Naive thymus-derived CD4-positive, alpha-beta T cell (primary cell): ENCODE measurements at regions of chr14 and their contacts with region 1.

Region 1: DNA sequence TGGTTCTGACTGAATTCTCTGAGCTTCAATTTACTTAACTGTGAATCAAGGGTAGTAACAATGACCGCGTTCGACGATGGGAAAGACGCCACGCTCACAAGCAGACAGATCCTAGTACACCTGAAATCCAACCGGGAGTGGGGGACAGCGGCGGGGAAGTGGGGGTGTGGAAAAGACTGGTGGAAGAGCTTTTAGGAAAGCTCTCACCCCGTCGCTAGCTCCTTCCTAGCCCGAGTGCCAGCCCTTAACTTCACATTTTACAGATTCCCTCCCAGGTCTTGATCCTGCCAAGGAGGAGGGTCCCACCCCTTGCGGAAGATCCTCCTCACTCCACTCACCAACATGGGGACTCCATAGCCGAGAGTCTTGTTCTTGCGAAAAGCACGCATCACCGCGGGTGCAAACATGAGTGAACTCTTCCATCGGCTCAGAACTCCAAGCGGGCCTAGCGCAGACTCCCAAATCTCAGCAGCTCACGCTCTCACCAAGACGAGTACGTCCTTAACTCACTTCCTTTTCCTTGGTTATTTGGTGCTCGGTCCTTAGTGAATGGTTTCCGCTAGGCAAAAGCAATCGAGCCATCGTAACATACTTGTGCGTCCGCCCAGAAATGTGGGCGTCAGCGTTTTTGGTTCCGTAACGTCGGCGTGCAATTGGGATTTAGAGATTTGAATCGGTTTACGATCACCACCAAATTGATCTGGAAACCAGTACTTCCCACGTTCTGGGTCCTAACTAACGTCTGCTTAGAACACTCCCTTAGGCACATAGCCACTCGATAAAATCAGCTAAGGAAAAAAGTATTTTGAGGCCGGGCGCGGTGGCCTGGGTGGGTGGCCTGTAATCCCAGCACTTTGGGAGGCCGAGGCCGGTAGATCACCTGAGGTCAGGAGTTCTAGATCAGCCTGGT is at the start of gene COX16:
- DNase-seq: peak; percentile 45 to 84 (median 81)
- ATAC-seq: peak; percentile 99
- H3K4me3 ChIP-seq: peak within 1 kb of the TSS; percentile 73
- H3K4me3 Mint-ChIP-seq: peak within 1 kb of the TSS; percentile 97 to 100 (median 99)
- H3K27ac ChIP-seq: peak within 1 kb of the TSS; percentile 82
- H3K27ac Mint-ChIP-seq: peak within 1 kb of the TSS; percentile 87 to 98 (median 94)
- H3K4me1 ChIP-seq: peaks cover 3 to 26% of the 10 kb centered on the region in 2 donors
- H3K4me1 Mint-ChIP-seq: peaks cover 32 to 58% (median 52%) of the 10 kb centered on the region in 7 donors
- H3K27me3 ChIP-seq: no peaks in the 10 kb centered on the region
- H3K27me3 Mint-ChIP-seq: peaks cover 0 to 12% (median 0%) of the 10 kb centered on the region in 5 donors
- total RNA-seq, gene COX16: 11.8 to 57.0 (median 19.5) TPM

Region 2: DNA sequence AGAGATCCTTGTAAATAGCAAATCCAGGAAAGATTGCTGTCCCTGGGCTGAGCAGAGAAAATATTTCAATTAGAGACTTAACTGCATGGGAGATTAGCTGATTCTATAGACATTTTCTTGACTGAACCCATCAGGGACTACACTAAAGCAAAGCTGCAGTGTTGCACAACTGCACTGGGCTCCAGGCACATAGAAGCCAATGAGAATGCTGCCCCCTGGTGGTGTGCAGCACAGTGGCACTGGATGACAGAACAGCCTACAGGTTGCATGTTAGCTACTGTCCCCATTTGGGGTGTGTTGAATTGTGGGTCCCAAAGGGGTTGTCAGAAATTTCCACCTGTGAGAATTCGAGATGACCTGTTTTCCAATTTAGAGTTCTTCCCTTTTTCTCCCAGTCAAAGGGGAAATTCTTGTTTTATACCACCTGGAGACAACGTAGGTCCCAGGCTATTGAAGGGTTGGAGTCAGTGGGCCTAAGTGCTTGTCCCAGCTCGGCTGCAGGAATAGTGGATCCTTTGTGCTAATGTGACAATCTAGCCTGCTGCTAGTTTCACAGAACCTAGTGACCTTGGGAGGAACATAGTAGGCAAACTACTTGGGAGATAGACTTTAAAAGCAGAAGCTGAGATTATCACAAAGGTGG is 285.4 kb before region 1 on chr14:
- CTCF ChIA-PET with region 1: no interaction called
- POLR2A ChIA-PET with region 1: no interaction called
- intact Hi-C with region 1: no loop called
- DNase-seq: peak in 4 of 9 donors; percentile 3 to 35 (median 6)
- ATAC-seq: no peak
- H3K4me3 ChIP-seq: no peak overlapping the region
- H3K4me3 Mint-ChIP-seq: no peak overlapping the region
- H3K27ac ChIP-seq: no peak overlapping the region
- H3K27ac Mint-ChIP-seq: no peak overlapping the region
- H3K4me1 ChIP-seq: no peaks in the 10 kb centered on the region
- H3K4me1 Mint-ChIP-seq: no peaks in the 10 kb centered on the region
- H3K27me3 ChIP-seq: no peaks in the 10 kb centered on the region
- H3K27me3 Mint-ChIP-seq: peaks cover 23 to 44% (median 33%) of the 10 kb centered on the region in 5 donors

Region 3: GRCh38 chr14:70254476-70254961 is 104.9 kb before region 1 on chr14:
- CTCF ChIA-PET with region 1: no interaction called
- POLR2A ChIA-PET with region 1: no interaction called
- intact Hi-C with region 1: loop called in 1 of 2 experiments (anchors 1 kb)
- DNase-seq: peak in 2 of 9 donors; percentile 1 to 11
- ATAC-seq: peak; percentile 54
- H3K4me3 ChIP-seq: no peak overlapping the region
- H3K4me3 Mint-ChIP-seq: peak overlapping the region in 6 of 10 donors; percentile 30 to 78 (median 36)
- H3K27ac ChIP-seq: no peak overlapping the region
- H3K27ac Mint-ChIP-seq: no peak overlapping the region
- H3K4me1 ChIP-seq: no peaks in the 10 kb centered on the region
- H3K4me1 Mint-ChIP-seq: peaks cover 4 to 15% (median 8%) of the 10 kb centered on the region in 7 donors
- H3K27me3 ChIP-seq: no peaks in the 10 kb centered on the region
- H3K27me3 Mint-ChIP-seq: peaks cover 61 to 73% (median 65%) of the 10 kb centered on the region in 5 donors

Region 4: DNA sequence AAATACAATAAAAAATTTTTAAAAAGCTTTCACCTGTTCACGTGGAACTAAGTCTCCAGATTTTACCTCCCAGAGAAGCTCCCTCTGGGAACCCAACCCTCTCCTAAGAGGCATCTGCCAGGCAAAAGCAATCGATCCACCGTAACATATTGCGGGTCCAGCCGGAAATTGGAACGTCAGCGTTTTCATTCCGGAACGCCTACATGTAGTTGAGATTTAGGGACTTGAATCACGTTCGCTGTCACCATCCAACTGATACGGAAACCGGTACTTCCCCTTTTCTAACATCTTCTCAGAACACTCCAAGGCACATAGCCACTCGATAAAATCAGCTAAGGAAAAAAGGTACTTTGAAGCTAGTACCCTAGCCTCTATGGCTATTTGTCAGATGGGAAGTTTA is 70.3 kb before region 1 on chr14:
- CTCF ChIA-PET with region 1: no interaction called
- POLR2A ChIA-PET with region 1: no interaction called
- intact Hi-C with region 1: loop called (anchors 1 to 2 kb)
- DNase-seq: peak in 6 of 9 donors; percentile 3 to 26 (median 15)
- ATAC-seq: no peak
- H3K4me3 ChIP-seq: no peak overlapping the region
- H3K4me3 Mint-ChIP-seq: peak overlapping the region in 9 of 10 donors; percentile 9 to 73 (median 58)
- H3K27ac ChIP-seq: no peak overlapping the region
- H3K27ac Mint-ChIP-seq: peak overlapping the region in 1 of 9 donors; percentile 28
- H3K4me1 ChIP-seq: no peaks in the 10 kb centered on the region
- H3K4me1 Mint-ChIP-seq: peaks cover 0 to 8% (median 0%) of the 10 kb centered on the region in 7 donors
- H3K27me3 ChIP-seq: no peaks in the 10 kb centered on the region
- H3K27me3 Mint-ChIP-seq: peaks cover 5 to 18% (median 12%) of the 10 kb centered on the region in 5 donors

Region 5: DNA sequence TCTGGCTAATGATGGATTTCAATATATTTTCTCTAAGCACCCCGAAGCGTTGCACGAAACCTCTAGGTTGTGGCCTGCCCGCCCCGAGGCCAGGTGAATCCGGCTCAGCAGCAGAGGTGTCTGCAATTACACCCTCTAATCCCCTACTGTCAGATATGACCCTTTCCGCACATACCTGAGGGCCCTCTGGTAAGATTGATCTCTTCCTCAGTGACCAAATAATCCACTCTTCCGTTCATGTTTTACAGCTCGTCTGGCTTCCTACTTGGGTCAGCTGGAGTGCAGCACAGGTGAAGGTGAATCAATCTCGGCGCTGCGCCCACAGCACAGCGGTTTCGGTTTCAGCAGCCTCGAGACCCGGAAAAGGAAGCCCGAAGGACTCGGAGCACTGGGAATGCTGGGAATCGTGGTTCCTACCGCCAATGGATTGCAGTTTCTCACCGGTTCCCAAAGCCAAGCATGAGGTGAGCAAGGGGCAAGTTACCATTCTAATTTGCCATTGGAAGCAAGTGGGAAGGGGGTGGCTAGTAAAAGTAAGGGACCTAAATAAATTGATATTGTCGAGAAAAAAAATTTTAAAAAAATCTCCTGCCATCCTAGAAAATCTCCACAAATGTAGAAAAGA is 57.4 kb after region 1 on chr14 and contains the start of gene SYNJ2BP:
- CTCF ChIA-PET with region 1: no interaction called
- POLR2A ChIA-PET with region 1: interaction called, 4 read pairs
- intact Hi-C with region 1: loop called (anchors 1 kb)
- DNase-seq: peak; percentile 11 to 57 (median 48)
- ATAC-seq: peak; percentile 80
- H3K4me3 ChIP-seq: peak within 1 kb of the TSS; percentile 78
- H3K4me3 Mint-ChIP-seq: peak within 1 kb of the TSS; percentile 87 to 98 (median 94)
- H3K27ac ChIP-seq: peak within 1 kb of the TSS; percentile 68
- H3K27ac Mint-ChIP-seq: peak within 1 kb of the TSS; percentile 22 to 97 (median 92)
- H3K4me1 ChIP-seq: peaks cover 0 to 13% of the 10 kb centered on the region in 2 donors
- H3K4me1 Mint-ChIP-seq: peaks cover 12 to 49% (median 45%) of the 10 kb centered on the region in 7 donors
- H3K27me3 ChIP-seq: no peaks in the 10 kb centered on the region
- H3K27me3 Mint-ChIP-seq: peaks cover 2 to 5% (median 3%) of the 10 kb centered on the region in 5 donors
- total RNA-seq, gene SYNJ2BP: 8.3 to 22.9 (median 14.4) TPM

Region 6: DNA sequence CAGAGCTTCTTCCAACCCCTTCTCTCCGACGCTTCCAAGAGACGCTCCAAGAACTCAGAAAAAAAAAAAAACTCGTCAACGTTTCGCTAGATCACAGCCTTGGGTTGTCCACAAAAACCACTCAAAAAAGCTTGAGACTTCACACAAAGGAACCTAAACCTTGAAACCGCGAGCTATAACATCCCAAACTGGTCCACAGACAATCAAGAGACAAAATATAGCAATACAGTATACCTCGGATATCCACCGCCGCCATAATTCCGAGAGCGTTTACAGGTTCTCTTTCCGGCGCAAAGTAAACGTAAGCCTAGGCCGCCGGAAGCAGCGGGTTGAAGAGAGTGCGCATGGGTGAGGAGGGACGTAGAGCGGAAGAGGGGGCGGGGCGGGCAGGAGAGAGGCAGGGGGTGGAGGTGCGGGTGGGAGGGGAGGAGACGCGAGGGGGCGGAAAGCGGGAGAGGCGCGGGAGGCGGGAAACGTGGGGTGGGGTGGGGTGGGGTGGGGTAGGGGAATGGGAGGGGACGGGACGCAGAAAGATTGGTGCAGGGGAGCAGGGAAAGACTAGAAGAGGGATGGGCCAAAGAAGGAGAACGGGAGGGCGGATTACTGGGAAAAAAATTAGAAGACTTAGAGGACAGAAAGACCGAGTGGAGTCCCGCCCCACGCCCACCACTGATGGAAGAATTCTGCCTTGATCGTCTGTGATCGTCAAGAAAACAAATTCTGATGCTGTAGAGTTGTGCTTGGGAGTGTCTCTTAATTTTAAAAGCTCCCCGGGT is 241.1 kb after region 1 on chr14 and contains the start of gene MED6:
- CTCF ChIA-PET with region 1: no interaction called
- POLR2A ChIA-PET with region 1: interaction called, 4 read pairs
- intact Hi-C with region 1: loop called (anchors 1 kb)
- DNase-seq: peak; percentile 78 to 94 (median 91)
- ATAC-seq: peak; percentile 100
- H3K4me3 ChIP-seq: peak within 1 kb of the TSS; percentile 96
- H3K4me3 Mint-ChIP-seq: peak within 1 kb of the TSS; percentile 97 to 100 (median 99)
- H3K27ac ChIP-seq: peak within 1 kb of the TSS; percentile 91
- H3K27ac Mint-ChIP-seq: peak within 1 kb of the TSS; percentile 96 to 99 (median 98)
- H3K4me1 ChIP-seq: peaks cover 11 to 14% of the 10 kb centered on the region in 2 donors
- H3K4me1 Mint-ChIP-seq: peaks cover 15 to 47% (median 40%) of the 10 kb centered on the region in 7 donors
- H3K27me3 ChIP-seq: no peaks in the 10 kb centered on the region
- H3K27me3 Mint-ChIP-seq: peaks cover 0 to 22% (median 6%) of the 10 kb centered on the region in 5 donors
- total RNA-seq, gene MED6: 53.4 to 97.0 (median 67.1) TPM

Region 7: DNA sequence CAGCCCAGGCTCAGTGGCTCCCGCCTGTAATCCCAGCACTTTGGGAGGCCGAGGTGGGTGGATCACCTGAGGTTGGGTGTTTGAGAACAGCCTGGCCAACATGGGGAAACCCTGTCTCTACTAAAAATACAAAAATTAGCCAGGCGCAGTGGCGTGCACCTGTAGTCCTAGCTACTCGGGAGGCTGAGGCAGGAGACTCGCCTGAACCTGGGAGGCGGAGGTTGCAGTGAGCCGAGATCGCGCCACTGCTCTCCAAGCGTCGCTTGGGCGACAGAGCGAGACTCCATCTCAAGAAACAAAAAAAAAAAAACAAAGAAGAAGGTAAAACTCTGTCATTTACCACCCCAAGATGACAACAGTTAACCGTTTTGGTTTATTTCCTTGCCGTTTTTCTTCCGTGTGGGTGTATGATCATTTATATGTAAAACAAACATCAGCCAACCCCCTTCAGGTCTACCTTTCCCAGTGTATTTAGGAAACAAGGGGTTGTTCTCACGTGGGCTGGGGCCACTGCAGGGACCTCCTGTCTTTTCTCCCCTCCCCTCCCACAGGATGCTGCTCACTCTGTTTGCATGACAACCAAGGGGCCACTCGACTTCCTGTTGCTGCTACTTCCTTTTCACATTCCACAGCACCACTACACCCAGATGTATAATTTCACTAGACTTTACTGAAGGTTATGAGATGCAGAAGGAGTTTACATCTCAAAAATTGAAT is 295.8 kb after region 1 on chr14:
- CTCF ChIA-PET with region 1: no interaction called
- POLR2A ChIA-PET with region 1: no interaction called
- intact Hi-C with region 1: loop called in 1 of 2 experiments (anchors 5 kb)
- DNase-seq: peak; percentile 29 to 93 (median 91)
- ATAC-seq: peak; percentile 95
- H3K4me3 ChIP-seq: peak overlapping the region; percentile 43
- H3K4me3 Mint-ChIP-seq: peak overlapping the region; percentile 76 to 89 (median 85)
- H3K27ac ChIP-seq: peak overlapping the region; percentile 84
- H3K27ac Mint-ChIP-seq: peak overlapping the region; percentile 94 to 99 (median 98)
- H3K4me1 ChIP-seq: peaks cover 60 to 83% of the 10 kb centered on the region in 2 donors
- H3K4me1 Mint-ChIP-seq: peaks cover 66 to 98% (median 94%) of the 10 kb centered on the region in 7 donors
- H3K27me3 ChIP-seq: no peaks in the 10 kb centered on the region
- H3K27me3 Mint-ChIP-seq: no peaks in the 10 kb centered on the region

Region 8: GRCh38 chr14:70809543-70810244 is 450.3 kb after region 1 on chr14:
- CTCF ChIA-PET with region 1: no interaction called
- POLR2A ChIA-PET with region 1: no interaction called
- intact Hi-C with region 1: loop called in 1 of 2 experiments (anchors 1 kb)
- DNase-seq: peak; percentile 68 to 87 (median 78)
- ATAC-seq: peak; percentile 90
- H3K4me3 ChIP-seq: peak overlapping the region; percentile 73
- H3K4me3 Mint-ChIP-seq: peak overlapping the region in 1 of 10 donors; percentile 87
- H3K27ac ChIP-seq: peak overlapping the region; percentile 65
- H3K27ac Mint-ChIP-seq: peak overlapping the region in 6 of 9 donors; percentile 79 to 92 (median 88)
- H3K4me1 ChIP-seq: peaks cover 3 to 10% of the 10 kb centered on the region in 2 donors
- H3K4me1 Mint-ChIP-seq: peaks cover 9 to 17% (median 13%) of the 10 kb centered on the region in 7 donors
- H3K27me3 ChIP-seq: no peaks in the 10 kb centered on the region
- H3K27me3 Mint-ChIP-seq: peaks cover 0 to 9% (median 4%) of the 10 kb centered on the region in 5 donors

Region 9: DNA sequence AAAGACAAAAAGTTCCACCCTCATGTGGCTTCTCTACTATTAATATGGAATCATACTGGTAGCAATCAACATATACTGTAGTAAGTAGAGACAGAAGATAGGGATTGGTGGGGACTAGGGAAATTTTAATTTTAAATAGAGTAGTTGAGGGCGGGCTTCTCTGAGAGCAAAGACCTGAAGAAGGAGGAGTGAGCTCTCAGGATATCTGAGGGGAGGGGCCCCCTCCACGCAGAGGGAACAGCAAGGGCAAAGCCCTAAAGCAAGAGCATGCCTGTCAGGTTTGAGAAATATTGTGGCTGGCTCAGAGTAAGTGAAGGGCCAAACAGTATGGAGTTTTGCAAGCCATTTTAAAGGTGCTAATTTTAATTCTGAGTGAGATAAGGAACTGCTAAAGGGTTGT is 612.1 kb after region 1 on chr14:
- CTCF ChIA-PET with region 1: no interaction called
- POLR2A ChIA-PET with region 1: no interaction called
- intact Hi-C with region 1: no loop called
- DNase-seq: peak in 1 of 9 donors; percentile 18
- ATAC-seq: peak; percentile 44
- H3K4me3 ChIP-seq: no peak overlapping the region
- H3K4me3 Mint-ChIP-seq: peak overlapping the region in 3 of 10 donors; percentile 11 to 51 (median 21)
- H3K27ac ChIP-seq: peak overlapping the region; percentile 54
- H3K27ac Mint-ChIP-seq: peak overlapping the region; percentile 6 to 89 (median 75)
- H3K4me1 ChIP-seq: peaks cover 9 to 19% of the 10 kb centered on the region in 2 donors
- H3K4me1 Mint-ChIP-seq: peaks cover 14 to 70% (median 53%) of the 10 kb centered on the region in 7 donors
- H3K27me3 ChIP-seq: no peaks in the 10 kb centered on the region
- H3K27me3 Mint-ChIP-seq: no peaks in the 10 kb centered on the region